ENCODE measurements at regions of chr10 and their contacts with region 1.

Region 1: GRCh38 chr10:62000037-62000603 is 98.6 kb downstream of the ARID5B start:
- DNase-seq: peak; percentile 60
- ATAC-seq: peak; percentile 86
- H3K4me3 Mint-ChIP-seq: peak overlapping the region; percentile 77
- H3K27ac Mint-ChIP-seq: peak overlapping the region; percentile 100
- H3K4me1 Mint-ChIP-seq: peaks cover 95% of the 10 kb centered on the region
- H3K27me3 Mint-ChIP-seq: no peaks in the 10 kb centered on the region
- CTCF ChIP-seq: no peak

Region 2: DNA sequence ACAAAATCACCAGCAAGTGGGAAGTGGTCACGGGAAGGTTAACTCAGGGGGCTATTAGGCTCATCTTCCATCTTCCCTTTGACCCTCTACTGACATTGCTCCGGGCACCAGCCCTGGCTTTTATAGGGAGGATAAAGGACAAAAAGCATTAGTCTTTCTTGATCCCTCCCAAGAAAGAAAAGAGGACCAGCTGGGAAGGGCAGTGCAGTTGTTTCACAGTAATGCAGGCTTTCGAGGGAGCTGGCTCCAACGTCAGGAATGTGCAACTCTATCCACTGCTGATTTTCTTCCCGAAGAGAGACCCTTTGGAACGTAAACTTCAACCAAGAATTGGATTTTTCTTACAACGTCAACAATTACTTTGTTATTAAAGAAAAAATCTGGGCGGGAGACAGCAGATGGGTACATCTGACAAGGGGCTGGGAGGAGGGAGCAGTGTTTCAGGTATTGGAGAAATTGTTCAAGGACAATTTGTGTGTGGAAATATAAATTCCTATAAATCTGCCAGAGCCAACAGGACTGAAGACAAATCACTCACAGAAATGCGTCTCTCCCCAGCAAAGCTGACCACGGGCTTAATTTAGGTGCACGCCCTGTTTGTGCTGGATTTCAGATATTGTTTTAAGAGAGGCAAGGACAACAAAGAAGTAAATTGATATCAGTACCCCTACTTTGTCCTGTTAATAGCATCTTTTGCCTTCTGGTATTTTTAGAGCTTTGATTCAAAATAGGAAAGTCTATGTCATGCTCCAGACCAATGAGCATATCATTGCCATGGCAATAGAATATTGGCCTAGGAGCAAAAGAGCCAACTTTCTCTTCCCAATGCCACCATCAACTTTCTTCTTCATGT is 122.0 kb before region 1 on chr10:
- CTCF ChIA-PET with region 1: no interaction called
- POLR2A ChIA-PET with region 1: no interaction called
- intact Hi-C with region 1: no loop called
- DNase-seq: no peak
- ATAC-seq: no peak
- H3K4me3 Mint-ChIP-seq: no peak overlapping the region
- H3K27ac Mint-ChIP-seq: no peak overlapping the region
- H3K4me1 Mint-ChIP-seq: peaks cover 9% of the 10 kb centered on the region
- H3K27me3 Mint-ChIP-seq: no peaks in the 10 kb centered on the region
- CTCF ChIP-seq: no peak

Region 3: DNA sequence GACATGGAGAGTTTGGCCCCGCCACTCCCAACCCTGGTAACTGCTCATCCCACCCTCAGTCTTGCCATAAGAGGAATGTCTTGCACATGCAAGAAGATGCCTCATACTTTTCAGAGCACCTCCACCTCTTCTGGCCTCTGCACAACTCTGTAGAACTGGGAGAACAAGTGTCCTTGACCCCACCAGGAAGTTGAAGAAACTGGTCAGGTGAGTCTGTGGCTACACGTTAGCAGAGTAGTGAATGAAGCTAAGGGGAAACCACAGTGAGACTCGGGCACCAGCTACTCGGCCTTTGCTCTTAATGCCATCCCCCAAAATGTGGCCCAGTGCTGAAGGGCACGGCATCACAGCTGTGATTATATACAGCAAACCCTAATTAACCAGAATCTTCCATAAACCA is 11.4 kb after region 1 on chr10:
- CTCF ChIA-PET with region 1: interaction called, 4 read pairs
- POLR2A ChIA-PET with region 1: interaction called, 168 read pairs
- intact Hi-C with region 1: no loop called
- DNase-seq: no peak
- ATAC-seq: peak; percentile 59
- H3K4me3 Mint-ChIP-seq: no peak overlapping the region
- H3K27ac Mint-ChIP-seq: peak overlapping the region; percentile 87
- H3K4me1 Mint-ChIP-seq: peaks cover 84% of the 10 kb centered on the region
- H3K27me3 Mint-ChIP-seq: no peaks in the 10 kb centered on the region
- CTCF ChIP-seq: no peak

Region 4: DNA sequence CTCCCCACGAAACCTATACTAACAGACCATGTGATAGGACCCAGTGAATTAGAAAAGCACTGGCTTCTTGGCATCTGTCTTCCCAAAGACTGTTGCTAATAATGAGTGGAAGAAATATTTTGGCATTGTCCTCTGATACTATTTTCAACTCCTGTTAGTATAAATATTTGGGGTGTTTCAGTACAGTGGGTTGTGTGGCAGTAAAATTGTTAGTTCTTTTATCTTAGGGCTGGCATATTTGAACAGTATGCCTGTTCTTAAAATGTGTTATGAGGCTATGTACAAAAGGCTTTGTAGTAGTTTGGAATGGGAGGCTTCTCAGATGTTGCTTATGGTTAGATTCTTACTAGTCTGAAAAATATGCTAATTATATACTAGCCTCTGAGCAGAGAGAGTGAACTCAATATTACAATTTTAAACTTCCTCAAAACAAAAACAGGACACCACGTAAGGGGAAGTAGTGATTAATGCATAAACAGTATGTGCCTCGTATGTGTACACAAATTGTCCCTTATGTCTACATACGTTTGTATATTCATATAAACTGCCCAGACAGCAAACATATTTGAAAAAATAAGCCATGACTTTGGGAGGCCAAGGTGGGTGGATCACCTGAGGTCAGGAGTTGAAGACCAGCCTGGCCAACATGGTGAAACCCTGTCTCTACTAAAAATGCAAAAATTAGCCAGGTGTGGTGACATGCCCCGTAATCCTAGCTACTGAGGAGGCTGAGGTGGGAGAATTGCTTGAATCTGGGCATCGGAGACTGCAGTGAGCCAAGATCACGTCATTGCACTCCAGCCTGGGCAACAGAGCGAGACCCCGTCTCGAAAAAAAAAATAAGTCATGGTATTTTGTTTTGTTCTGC is 16.7 kb after region 1 on chr10:
- CTCF ChIA-PET with region 1: interaction called, 4 read pairs
- POLR2A ChIA-PET with region 1: interaction called, 168 read pairs
- intact Hi-C with region 1: loop called (anchors 1 kb)
- DNase-seq: peak; percentile 40
- ATAC-seq: peak; percentile 65
- H3K4me3 Mint-ChIP-seq: peak overlapping the region; percentile 66
- H3K27ac Mint-ChIP-seq: peak overlapping the region; percentile 96
- H3K4me1 Mint-ChIP-seq: peaks cover 84% of the 10 kb centered on the region
- H3K27me3 Mint-ChIP-seq: no peaks in the 10 kb centered on the region
- CTCF ChIP-seq: no peak